ENCODE measurements at regions of chr4 and their contacts with region 1.

Region 1: DNA sequence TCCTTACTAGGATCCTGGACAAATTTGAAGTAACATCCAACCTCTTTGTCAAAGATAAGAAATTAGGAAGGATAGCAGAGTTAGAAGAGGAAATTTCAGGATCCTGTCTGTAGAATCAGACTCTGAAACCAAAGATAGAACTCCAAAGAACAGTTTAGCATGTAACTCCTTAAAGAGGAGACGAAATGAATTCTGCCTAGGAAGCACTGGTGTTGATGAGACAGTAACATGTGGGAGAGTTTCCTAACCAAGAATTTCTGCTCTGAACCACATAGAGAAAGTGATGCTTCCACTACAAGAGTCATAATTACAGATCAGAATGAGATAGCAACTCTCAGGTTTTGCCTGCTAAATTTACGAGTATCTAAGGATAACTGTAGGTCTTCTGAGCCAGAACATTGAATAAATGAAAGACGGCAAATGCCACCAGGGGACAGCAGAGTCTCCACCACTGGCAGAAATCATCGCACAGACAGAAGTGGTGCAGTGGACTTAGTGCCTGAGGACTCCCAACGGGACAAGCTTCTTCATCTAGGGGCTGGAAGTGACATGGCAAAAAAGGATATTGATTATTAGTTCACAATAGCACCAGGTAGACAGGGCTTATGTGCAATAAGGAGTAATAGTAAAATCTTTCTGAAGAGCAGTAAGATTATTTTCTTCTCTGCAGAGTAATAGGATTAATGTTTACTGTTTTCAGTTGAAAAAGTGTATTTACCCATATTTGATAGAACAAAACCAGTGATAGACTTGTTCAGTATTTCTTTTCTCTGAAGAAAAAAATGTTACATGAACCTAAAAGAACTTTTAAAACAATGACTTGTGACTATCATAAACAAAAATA is 6.7 kb upstream of the PPID start:
- DNase-seq: peak; percentile 60 to 84 (median 66)
- ATAC-seq: peak; percentile 93 to 95
- H3K4me3 ChIP-seq: no peak overlapping the region
- H3K27ac ChIP-seq: no peak overlapping the region
- H3K4me1 ChIP-seq: no peaks in the 10 kb centered on the region
- H3K27me3 ChIP-seq: no peaks in the 10 kb centered on the region

Region 2: DNA sequence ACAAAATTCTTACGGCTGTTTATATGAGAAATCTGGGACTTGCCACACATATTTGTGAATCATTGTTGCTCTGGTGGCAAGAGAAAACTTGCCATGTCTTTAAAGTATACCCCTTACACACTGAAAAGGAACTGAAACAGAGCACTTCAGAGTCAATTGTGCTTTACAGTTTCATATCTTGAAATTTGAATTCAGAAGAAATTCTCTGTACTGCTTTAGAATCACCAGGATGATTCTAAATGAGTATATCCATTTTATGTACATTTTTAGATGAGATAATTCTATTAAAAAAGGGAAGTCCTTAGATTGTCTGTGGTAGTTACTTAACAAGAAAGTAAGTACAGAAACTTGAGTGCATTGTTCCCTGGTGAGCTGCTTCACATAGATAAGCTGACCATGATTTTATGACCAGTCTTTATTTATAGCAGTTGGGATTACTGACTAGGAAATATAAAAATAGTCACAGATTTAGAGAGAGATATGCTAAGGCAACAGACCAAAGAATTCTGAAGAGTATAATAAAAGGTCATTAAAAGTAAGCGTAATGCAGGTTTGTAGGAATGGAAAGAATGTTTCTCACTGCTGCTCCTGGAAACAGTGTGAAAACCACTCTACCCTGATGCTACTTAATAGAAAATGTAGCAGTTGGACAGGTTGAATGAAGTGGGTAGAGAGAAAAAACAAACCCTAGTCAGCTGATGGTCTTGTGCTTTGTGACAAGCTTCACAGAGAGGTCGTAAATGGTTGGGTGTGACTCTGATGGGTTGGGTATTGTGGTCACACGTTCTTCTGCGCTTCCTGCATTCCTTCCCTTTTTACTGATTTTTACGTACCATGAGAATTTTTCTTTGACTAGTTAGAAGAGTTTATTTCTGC is 79.9 kb after region 1 on chr4:
- intact Hi-C with region 1: no loop called
- DNase-seq: no peak
- ATAC-seq: peak; percentile 52 to 54
- H3K4me3 ChIP-seq: no peak overlapping the region
- H3K27ac ChIP-seq: peak overlapping the region; percentile 78
- H3K4me1 ChIP-seq: peaks cover 17% of the 10 kb centered on the region
- H3K27me3 ChIP-seq: no peaks in the 10 kb centered on the region

Region 3: DNA sequence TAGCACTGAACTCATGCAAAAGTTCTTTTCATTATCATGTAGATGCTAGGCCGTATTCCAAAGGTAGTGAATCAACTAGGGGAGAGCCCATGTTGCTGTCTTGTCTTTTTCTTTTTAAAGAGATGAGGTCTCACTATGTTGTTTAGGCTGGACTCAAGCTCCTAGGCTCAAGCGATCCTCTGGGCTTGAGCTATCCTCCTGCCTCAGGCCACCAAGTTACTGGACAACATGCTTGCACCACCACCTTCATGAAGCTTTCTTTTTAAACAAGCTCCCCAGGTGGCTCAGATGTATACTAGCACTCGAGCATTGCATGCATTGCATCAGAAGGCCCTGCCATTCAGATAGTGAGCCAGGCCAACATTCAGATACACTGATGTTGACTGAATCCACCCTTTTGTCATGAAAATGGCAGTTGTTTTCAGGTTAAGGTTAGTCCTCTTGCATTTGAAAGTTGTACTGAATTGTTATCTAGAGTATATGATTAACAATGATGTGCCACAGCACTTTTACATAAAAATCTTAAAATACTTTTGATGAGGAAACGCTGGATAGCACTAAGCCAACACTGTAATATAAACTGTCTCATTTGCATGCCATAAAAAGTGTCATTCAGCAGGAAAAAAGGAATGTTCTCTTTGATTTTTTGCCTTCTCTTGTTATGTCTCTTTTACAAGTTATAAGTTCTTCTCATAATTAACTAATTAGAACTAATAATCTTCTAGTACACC is 115.5 kb after region 1 on chr4:
- intact Hi-C with region 1: loop called (anchors 2 to 5 kb)
- DNase-seq: no peak
- ATAC-seq: no peak
- H3K4me3 ChIP-seq: no peak overlapping the region
- H3K27ac ChIP-seq: no peak overlapping the region
- H3K4me1 ChIP-seq: peaks cover 5% of the 10 kb centered on the region
- H3K27me3 ChIP-seq: no peaks in the 10 kb centered on the region

Region 4: DNA sequence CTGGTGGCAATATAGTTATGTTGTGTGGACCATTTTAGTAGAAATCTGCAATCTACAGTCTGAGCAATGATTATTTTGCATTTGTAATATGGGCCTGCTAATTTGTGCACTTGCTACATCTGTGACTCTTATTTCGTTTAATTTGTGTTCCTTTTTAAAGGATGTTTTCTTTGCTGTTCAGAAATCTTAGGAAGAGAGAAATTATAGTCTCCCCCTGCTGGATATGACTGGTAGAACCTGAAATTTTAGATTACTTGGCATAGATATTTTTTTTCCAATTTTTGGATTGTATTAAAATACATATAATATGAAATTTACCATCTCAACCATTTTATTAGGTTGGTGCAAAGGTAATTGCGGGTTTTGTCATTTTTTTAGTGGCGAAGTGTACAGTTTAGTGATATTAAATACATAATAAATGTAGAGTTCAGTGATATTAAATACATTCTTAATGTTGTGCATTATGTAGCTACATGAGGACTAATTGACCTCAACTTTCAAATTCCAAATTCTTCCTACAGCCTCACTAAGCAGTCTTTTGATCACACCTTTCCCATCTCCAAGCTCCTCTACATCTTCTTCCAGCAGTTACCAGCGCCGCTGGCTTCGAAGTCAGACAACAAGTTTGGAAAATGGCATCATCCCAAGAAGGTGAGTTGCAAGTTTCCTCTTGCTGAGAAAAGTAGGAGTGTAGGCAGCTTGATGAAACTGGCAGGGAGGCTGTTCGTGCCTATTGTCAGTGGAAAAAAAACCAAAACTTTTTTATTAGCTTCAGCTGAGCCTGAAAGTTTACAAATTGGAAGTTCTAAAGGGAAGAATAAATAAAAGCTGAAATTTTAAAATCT is 121.1 kb after region 1 on chr4:
- intact Hi-C with region 1: loop called (anchors 2 to 5 kb)
- DNase-seq: no peak
- ATAC-seq: no peak
- H3K4me3 ChIP-seq: no peak overlapping the region
- H3K27ac ChIP-seq: no peak overlapping the region
- H3K4me1 ChIP-seq: peaks cover 2% of the 10 kb centered on the region
- H3K27me3 ChIP-seq: no peaks in the 10 kb centered on the region

Measured in right cardiac atrium (tissue), 5 donors.